ENCODE measurements at regions of chr7 and their contacts with region 1.

Region 1: DNA sequence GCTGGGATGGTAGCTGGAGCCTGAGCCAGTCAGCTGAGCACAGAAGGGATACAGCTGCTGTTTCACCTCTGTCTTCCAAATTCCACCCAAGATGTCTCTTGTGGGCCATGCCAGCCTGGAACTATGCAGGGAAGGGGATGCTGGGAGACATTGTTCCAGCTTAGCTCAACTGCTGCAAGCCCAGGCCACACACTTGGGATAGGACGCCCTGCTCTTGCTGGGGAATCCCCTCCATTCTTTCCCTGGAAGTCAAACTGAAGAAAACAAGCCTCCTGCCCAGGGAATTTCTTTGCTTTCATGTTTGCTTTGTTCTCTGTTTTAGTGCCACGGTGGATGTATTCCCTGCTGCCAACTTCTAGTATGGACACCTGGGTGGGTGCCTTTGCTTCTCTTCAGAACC is 55.2 kb upstream of the CDK13 start:
- DNase-seq: no peak
- ATAC-seq: peak in 1 of 2 experiments; percentile 33; a peak in 2 of 6 replicates
- H3K4me3 ChIP-seq: no peak overlapping the region
- H3K27ac ChIP-seq: no peak overlapping the region
- H3K4me1 ChIP-seq: peaks cover 3% of the 10 kb centered on the region; the same call in 1 of the 3 replicates
- CTCF ChIP-seq: no peak
- EP300 ChIP-seq: no peak
- POLR2A ChIP-seq: no peak
- RAD21 ChIP-seq: no peak

Region 2: DNA sequence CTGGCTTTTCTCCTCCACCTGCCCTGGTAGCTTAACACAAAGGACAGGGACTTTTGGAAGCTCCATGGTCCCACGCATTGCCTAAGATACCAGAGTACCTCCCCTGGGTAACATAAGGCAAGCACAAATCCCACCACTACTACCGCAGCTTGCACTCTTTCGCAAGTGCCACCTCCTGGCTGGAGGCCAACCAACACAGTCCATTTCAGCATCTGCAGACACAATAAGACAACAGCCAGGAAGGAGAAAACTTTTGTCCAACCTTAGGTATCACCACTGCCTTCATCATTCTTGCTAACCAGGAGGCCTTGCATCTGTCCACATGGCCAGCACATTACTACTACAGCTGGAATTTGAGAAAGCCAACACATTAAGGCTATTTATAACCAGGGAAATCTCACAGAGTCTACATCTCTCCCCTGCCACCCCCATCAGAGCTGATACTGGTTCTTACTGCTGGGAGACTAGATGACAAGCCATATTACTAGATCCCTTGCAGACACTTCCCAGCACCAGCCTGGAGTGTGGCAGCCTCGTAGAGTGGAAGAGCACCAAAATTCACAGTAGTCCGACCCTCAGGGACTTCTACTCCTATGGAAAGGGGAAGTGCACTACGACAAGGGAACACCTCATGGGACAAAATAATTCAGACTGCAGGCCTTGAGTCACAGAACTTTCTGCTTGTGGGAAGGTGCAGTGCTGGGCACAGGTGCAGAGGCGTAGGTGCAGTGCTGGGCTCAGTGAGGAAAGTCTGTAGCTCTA is 15.4 kb after region 1 on chr7:
- CTCF ChIA-PET with region 1: interaction called, 23 read pairs
- POLR2A ChIA-PET with region 1: no interaction called
- DNase-seq: no peak
- ATAC-seq: peak; percentile 19 to 56; a peak in 4 of 6 replicates
- H3K4me3 ChIP-seq: no peak overlapping the region
- H3K27ac ChIP-seq: no peak overlapping the region
- H3K4me1 ChIP-seq: no peaks in the 10 kb centered on the region
- CTCF ChIP-seq: no peak
- EP300 ChIP-seq: no peak
- POLR2A ChIP-seq: no peak
- RAD21 ChIP-seq: no peak

Region 3: GRCh38 chr7:39921506-39922175 is 26.7 kb after region 1 on chr7:
- CTCF ChIA-PET with region 1: interaction called, 21 read pairs
- POLR2A ChIA-PET with region 1: no interaction called
- DNase-seq: no peak
- ATAC-seq: no peak
- H3K4me3 ChIP-seq: no peak overlapping the region
- H3K27ac ChIP-seq: no peak overlapping the region
- H3K4me1 ChIP-seq: no peaks in the 10 kb centered on the region
- CTCF ChIP-seq: no peak
- EP300 ChIP-seq: no peak
- POLR2A ChIP-seq: no peak
- RAD21 ChIP-seq: no peak

Region 4: DNA sequence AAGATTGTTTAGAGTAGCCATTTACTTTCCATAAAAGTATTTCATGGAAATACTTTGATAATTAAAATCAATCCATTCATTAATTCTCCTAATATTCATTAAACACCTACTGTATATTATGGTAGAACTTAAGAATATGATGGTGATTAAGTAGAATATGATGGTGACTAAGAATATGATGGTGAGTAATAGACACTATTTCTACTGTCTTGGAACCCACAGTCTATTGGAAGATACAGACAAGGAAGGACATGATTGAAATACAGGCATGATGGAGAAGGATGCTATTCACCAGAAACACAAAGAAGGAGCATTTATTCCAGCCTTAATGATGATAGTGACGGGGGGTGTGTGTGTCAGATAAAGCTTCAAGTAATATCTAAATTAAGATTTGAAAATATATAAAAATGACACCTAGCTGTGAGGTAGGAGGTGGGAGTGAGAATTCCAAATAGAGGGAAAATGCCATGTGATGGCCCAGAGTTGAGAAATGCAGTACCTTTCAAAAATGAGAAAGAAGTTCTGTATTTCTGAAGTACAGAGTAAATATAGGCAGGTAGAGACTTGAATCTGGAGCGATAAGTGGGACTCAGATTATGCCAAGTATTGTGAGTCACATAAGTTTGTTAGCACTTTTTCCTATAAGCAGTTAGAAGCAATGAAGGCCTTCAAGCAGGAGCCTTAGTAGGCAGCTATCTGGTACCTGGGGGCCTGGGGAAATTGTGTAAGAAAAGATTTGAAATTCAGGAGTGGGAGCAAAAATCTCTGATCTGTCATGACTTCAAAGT is 42.7 kb after region 1 on chr7:
- CTCF ChIA-PET with region 1: interaction called, 15 read pairs
- POLR2A ChIA-PET with region 1: no interaction called
- DNase-seq: no peak
- ATAC-seq: no peak
- H3K4me3 ChIP-seq: no peak overlapping the region
- H3K27ac ChIP-seq: no peak overlapping the region
- H3K4me1 ChIP-seq: no peaks in the 10 kb centered on the region
- CTCF ChIP-seq: no peak
- EP300 ChIP-seq: no peak
- POLR2A ChIP-seq: no peak
- RAD21 ChIP-seq: no peak

Region 5: GRCh38 chr7:39948956-39949928 is 54.3 kb after region 1 on chr7:
- CTCF ChIA-PET with region 1: interaction called, 18 read pairs
- POLR2A ChIA-PET with region 1: interaction called, 3 read pairs
- DNase-seq: peak; percentile 96 to 99
- ATAC-seq: peak; percentile 85 to 91
- H3K4me3 ChIP-seq: peak overlapping the region; percentile 84
- H3K27ac ChIP-seq: peak overlapping the region; percentile 99 to 100
- H3K4me1 ChIP-seq: peaks cover 18% of the 10 kb centered on the region
- CTCF ChIP-seq: no peak
- EP300 ChIP-seq: no peak
- POLR2A ChIP-seq: peak; percentile 96
- RAD21 ChIP-seq: peak in 1 of 2 experiments; percentile 24; a peak in 1 of 5 replicates

Region 6: GRCh38 chr7:40134428-40135316 is 239.8 kb after region 1 on chr7 and contains the starts of genes MPLKIP and SUGCT:
- CTCF ChIA-PET with region 1: interaction called, 12 read pairs
- POLR2A ChIA-PET with region 1: interaction called, 6 read pairs
- DNase-seq: peak; percentile 82 to 90
- ATAC-seq: peak; percentile 91 to 93
- H3K4me3 ChIP-seq: peak within 1 kb of the TSS; percentile 94
- H3K27ac ChIP-seq: peak within 1 kb of the TSS; percentile 83 to 91
- H3K4me1 ChIP-seq: peaks cover 13% of the 10 kb centered on the region; the same call in 2 of the 3 replicates
- CTCF ChIP-seq: peak; percentile 95
- EP300 ChIP-seq: no peak
- POLR2A ChIP-seq: peak; percentile 62
- RAD21 ChIP-seq: peak; percentile 8 to 50; a peak in 3 of 5 replicates
- polyA plus RNA-seq, gene MPLKIP: 27.7 and 46.0 TPM in 2 replicates
- polyA plus RNA-seq, gene SUGCT: 1.4 and 1.6 TPM in 2 replicates

Measured in A549 (cell line).